CD14-positive monocyte (primary cell): ENCODE measurements at regions of chr17 and their contacts with region 1.

Region 1: GRCh38 chr17:12164085-12164484 is 143.4 kb downstream of the MAP2K4 start:
- DNase-seq: no peak
- H3K4me3 ChIP-seq: no peak overlapping the region
- H3K4me3 Mint-ChIP-seq: no peak overlapping the region
- H3K27ac ChIP-seq: no peak overlapping the region
- H3K27ac Mint-ChIP-seq: no peak overlapping the region
- H3K4me1 ChIP-seq: no peaks in the 10 kb centered on the region
- H3K4me1 Mint-ChIP-seq: no peaks in the 10 kb centered on the region
- H3K27me3 ChIP-seq: no peaks in the 10 kb centered on the region
- H3K27me3 Mint-ChIP-seq: peaks cover 1 to 4% (median 3%) of the 10 kb centered on the region in 3 donors
- CTCF ChIP-seq: no peak

Region 2: GRCh38 chr17:12187658-12188057 is 23.6 kb after region 1 on chr17:
- intact Hi-C with region 1: loop called in 1 of 2 experiments (anchors 2 kb)
- DNase-seq: no peak
- H3K4me3 ChIP-seq: no peak overlapping the region
- H3K4me3 Mint-ChIP-seq: no peak overlapping the region
- H3K27ac ChIP-seq: no peak overlapping the region
- H3K27ac Mint-ChIP-seq: no peak overlapping the region
- H3K4me1 ChIP-seq: no peaks in the 10 kb centered on the region
- H3K4me1 Mint-ChIP-seq: no peaks in the 10 kb centered on the region
- H3K27me3 ChIP-seq: no peaks in the 10 kb centered on the region
- H3K27me3 Mint-ChIP-seq: peaks cover 0 to 2% (median 0%) of the 10 kb centered on the region in 3 donors
- CTCF ChIP-seq: no peak